ENCODE measurements at regions of chr6 and their contacts with region 1.

Region 1: GRCh38 chr6:132788658-132789395 is 9.6 kb downstream of the SLC18B1 start:
- DNase-seq: no peak
- ATAC-seq: no peak
- H3K4me3 ChIP-seq: no peak overlapping the region
- H3K4me3 Mint-ChIP-seq: no peak overlapping the region
- H3K27ac ChIP-seq: no peak overlapping the region
- H3K27ac Mint-ChIP-seq: no peak overlapping the region
- H3K4me1 ChIP-seq: no peaks in the 10 kb centered on the region
- H3K4me1 Mint-ChIP-seq: peaks cover 0 to 16% (median 12%) of the 10 kb centered on the region in 3 donors
- H3K27me3 ChIP-seq: no peaks in the 10 kb centered on the region
- H3K27me3 Mint-ChIP-seq: no peaks in the 10 kb centered on the region

Region 2: GRCh38 chr6:132430110-132430509 is 358.7 kb before region 1 on chr6:
- CTCF ChIA-PET with region 1: no interaction called
- POLR2A ChIA-PET with region 1: no interaction called
- DNase-seq: no peak
- ATAC-seq: no peak
- H3K4me3 ChIP-seq: no peak overlapping the region
- H3K4me3 Mint-ChIP-seq: no peak overlapping the region
- H3K27ac ChIP-seq: no peak overlapping the region
- H3K27ac Mint-ChIP-seq: no peak overlapping the region
- H3K4me1 ChIP-seq: no peaks in the 10 kb centered on the region
- H3K4me1 Mint-ChIP-seq: no peaks in the 10 kb centered on the region
- H3K27me3 ChIP-seq: peaks cover 0 to 10% of the 10 kb centered on the region in 2 experiments
- H3K27me3 Mint-ChIP-seq: peaks cover 21 to 41% of the 10 kb centered on the region in 2 donors

Region 3: GRCh38 chr6:132820629-132821381 is 32.0 kb after region 1 on chr6:
- CTCF ChIA-PET with region 1: interaction called in 1 of 2 experiments, 10 read pairs
- POLR2A ChIA-PET with region 1: interaction called in 1 of 2 experiments, 3 read pairs
- DNase-seq: peak in 1 of 35 experiments; percentile 12
- ATAC-seq: peak in 1 of 4 experiments; percentile 19
- H3K4me3 ChIP-seq: no peak overlapping the region
- H3K4me3 Mint-ChIP-seq: no peak overlapping the region
- H3K27ac ChIP-seq: no peak overlapping the region
- H3K27ac Mint-ChIP-seq: peak overlapping the region; percentile 88
- H3K4me1 ChIP-seq: peaks cover 9 to 15% of the 10 kb centered on the region in 2 experiments
- H3K4me1 Mint-ChIP-seq: peaks cover 48 to 61% (median 53%) of the 10 kb centered on the region in 3 donors
- H3K27me3 ChIP-seq: no peaks in the 10 kb centered on the region
- H3K27me3 Mint-ChIP-seq: no peaks in the 10 kb centered on the region

Region 4: GRCh38 chr6:133623065-133623464 is 834.2 kb after region 1 on chr6:
- CTCF ChIA-PET with region 1: no interaction called
- POLR2A ChIA-PET with region 1: interaction called in 1 of 2 experiments, 10 read pairs
- DNase-seq: no peak
- ATAC-seq: no peak
- H3K4me3 ChIP-seq: no peak overlapping the region
- H3K4me3 Mint-ChIP-seq: no peak overlapping the region
- H3K27ac ChIP-seq: no peak overlapping the region
- H3K27ac Mint-ChIP-seq: no peak overlapping the region
- H3K4me1 ChIP-seq: no peaks in the 10 kb centered on the region
- H3K4me1 Mint-ChIP-seq: no peaks in the 10 kb centered on the region
- H3K27me3 ChIP-seq: peaks cover 0 to 3% of the 10 kb centered on the region in 2 experiments
- H3K27me3 Mint-ChIP-seq: no peaks in the 10 kb centered on the region

Measured in T-cell (primary cell).